ENCODE measurements at regions of chr2 and their contacts with region 1.

Region 1: DNA sequence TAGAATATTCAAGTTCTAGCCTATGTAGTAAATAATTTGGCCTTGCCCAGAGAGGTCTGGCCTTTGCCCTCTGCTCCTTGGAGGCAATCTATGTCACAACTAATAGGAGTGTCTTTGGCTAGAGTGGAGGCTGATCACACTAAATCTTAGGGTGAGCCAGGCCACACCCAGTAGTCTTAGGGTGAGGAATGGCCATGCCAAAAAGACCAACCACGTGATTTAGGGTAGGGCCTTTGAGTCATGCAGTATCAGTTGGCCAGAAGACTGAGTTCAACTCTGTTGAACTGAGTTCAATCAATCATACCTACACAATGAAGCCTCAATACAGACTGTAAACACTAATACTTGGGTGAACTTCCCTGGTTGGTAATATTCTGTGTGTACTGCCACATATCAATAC is 26.0 kb upstream of the FLACC1 start:
- DNase-seq: no peak
- H3K4me3 ChIP-seq: no peak overlapping the region
- H3K27ac ChIP-seq: no peak overlapping the region
- H3K4me1 ChIP-seq: peaks cover 9% of the 10 kb centered on the region; the same call in 1 of the 2 replicates
- H3K27me3 ChIP-seq: no peaks in the 10 kb centered on the region
- CTCF ChIP-seq: no peak

Region 2: GRCh38 chr2:201680743-201681142 is 297.6 kb after region 1 on chr2:
- CTCF ChIA-PET with region 1: interaction called, 10 read pairs
- POLR2A ChIA-PET with region 1: no interaction called
- intact Hi-C with region 1: no loop called
- DNase-seq: peak in 1 of 2 experiments; percentile 9
- H3K4me3 ChIP-seq: no peak overlapping the region
- H3K27ac ChIP-seq: no peak overlapping the region
- H3K4me1 ChIP-seq: no peaks in the 10 kb centered on the region
- H3K27me3 ChIP-seq: no peaks in the 10 kb centered on the region
- CTCF ChIP-seq: peak; percentile 53